ENCODE measurements at regions of chr6 and their contacts with region 1.

Region 1: GRCh38 chr6:156175971-156176421 is 601.2 kb upstream of the ARID1B start:
- DNase-seq: peak; percentile 38
- ATAC-seq: peak; percentile 91
- H3K4me3 ChIP-seq: no peak overlapping the region
- H3K27ac ChIP-seq: no peak overlapping the region
- H3K4me1 ChIP-seq: no peaks in the 10 kb centered on the region
- H3K27me3 ChIP-seq: no peaks in the 10 kb centered on the region
- CTCF ChIP-seq: peak; percentile 31 to 56 (median 42); a peak in 4 of 6 replicates
- POLR2A ChIP-seq: no peak
- RAD21 ChIP-seq: peak; percentile 56

Region 2: GRCh38 chr6:156406099-156406498 is 230.1 kb after region 1 on chr6:
- CTCF ChIA-PET with region 1: no interaction called
- POLR2A ChIA-PET with region 1: no interaction called
- RAD21 ChIA-PET with region 1: no interaction called
- intact Hi-C with region 1: loop called (anchors 5 kb)
- DNase-seq: no peak
- ATAC-seq: no peak
- H3K4me3 ChIP-seq: no peak overlapping the region
- H3K27ac ChIP-seq: no peak overlapping the region
- H3K4me1 ChIP-seq: no peaks in the 10 kb centered on the region
- H3K27me3 ChIP-seq: no peaks in the 10 kb centered on the region
- CTCF ChIP-seq: no peak
- POLR2A ChIP-seq: no peak
- RAD21 ChIP-seq: no peak

Measured in HCT116 (cell line).